ENCODE measurements at regions of chr7 and their contacts with region 1.

Region 1: GRCh38 chr7:35037526-35038339 is 448 bp upstream of the DPY19L1 start:
- DNase-seq: peak; percentile 94
- H3K4me3 ChIP-seq: peak overlapping the region; percentile 79
- H3K27ac ChIP-seq: peak overlapping the region; percentile 61
- H3K4me1 ChIP-seq: peaks cover 27% of the 10 kb centered on the region
- CTCF ChIP-seq: peak; percentile 90

Region 2: GRCh38 chr7:34823640-34824258 is 214.0 kb before region 1 on chr7:
- CTCF ChIA-PET with region 1: no interaction called
- POLR2A ChIA-PET with region 1: interaction called, 3 read pairs
- intact Hi-C with region 1: loop called (anchors 1 kb)
- DNase-seq: peak; percentile 36
- H3K4me3 ChIP-seq: no peak overlapping the region
- H3K27ac ChIP-seq: no peak overlapping the region
- H3K4me1 ChIP-seq: no peaks in the 10 kb centered on the region
- CTCF ChIP-seq: peak; percentile 87

Region 3: GRCh38 chr7:34949361-34949760 is 88.4 kb before region 1 on chr7:
- CTCF ChIA-PET with region 1: no interaction called
- POLR2A ChIA-PET with region 1: no interaction called
- intact Hi-C with region 1: loop called (anchors 5 kb)
- DNase-seq: no peak
- H3K4me3 ChIP-seq: no peak overlapping the region
- H3K27ac ChIP-seq: no peak overlapping the region
- H3K4me1 ChIP-seq: no peaks in the 10 kb centered on the region
- CTCF ChIP-seq: no peak

Region 4: GRCh38 chr7:35253710-35254495 is 216.2 kb after region 1 on chr7 and contains the start of gene TBX20:
- CTCF ChIA-PET with region 1: no interaction called
- POLR2A ChIA-PET with region 1: no interaction called
- intact Hi-C with region 1: loop called (anchors 5 kb)
- DNase-seq: peak; percentile 66
- H3K4me3 ChIP-seq: peak within 1 kb of the TSS; percentile 78
- H3K27ac ChIP-seq: no peak within 1 kb of the TSS
- H3K4me1 ChIP-seq: peaks cover 3% of the 10 kb centered on the region
- CTCF ChIP-seq: no peak
- total RNA-seq, gene TBX20: 2.6 and 3.0 TPM in 2 replicates

Region 5: DNA sequence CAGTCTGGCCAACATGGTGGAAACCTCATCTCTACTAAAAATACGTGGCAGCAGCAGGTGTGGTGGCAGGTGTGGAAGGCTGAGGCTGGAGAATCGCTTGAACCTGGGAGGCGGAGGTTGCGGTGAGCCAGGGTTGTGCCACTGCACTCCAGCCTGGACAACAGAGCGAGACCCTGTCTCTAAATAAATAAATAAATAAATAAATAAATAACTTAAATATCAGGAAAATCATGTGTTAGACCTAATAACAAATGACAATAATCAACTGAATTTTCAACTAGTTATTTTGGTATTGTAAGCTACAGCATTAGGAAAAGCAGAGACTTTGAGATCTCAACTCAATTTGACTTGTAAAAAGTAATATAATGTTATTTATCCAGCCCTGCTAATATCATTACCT is 648.0 kb after region 1 on chr7:
- CTCF ChIA-PET with region 1: no interaction called
- POLR2A ChIA-PET with region 1: no interaction called
- intact Hi-C with region 1: loop called (anchors 5 kb)
- DNase-seq: no peak
- H3K4me3 ChIP-seq: no peak overlapping the region
- H3K27ac ChIP-seq: no peak overlapping the region
- H3K4me1 ChIP-seq: peaks cover 44% of the 10 kb centered on the region
- CTCF ChIP-seq: no peak